Esophagus squamous epithelium (tissue), 5 donors: ENCODE measurements at regions of chr9 and their contacts with region 1.

Region 1: DNA sequence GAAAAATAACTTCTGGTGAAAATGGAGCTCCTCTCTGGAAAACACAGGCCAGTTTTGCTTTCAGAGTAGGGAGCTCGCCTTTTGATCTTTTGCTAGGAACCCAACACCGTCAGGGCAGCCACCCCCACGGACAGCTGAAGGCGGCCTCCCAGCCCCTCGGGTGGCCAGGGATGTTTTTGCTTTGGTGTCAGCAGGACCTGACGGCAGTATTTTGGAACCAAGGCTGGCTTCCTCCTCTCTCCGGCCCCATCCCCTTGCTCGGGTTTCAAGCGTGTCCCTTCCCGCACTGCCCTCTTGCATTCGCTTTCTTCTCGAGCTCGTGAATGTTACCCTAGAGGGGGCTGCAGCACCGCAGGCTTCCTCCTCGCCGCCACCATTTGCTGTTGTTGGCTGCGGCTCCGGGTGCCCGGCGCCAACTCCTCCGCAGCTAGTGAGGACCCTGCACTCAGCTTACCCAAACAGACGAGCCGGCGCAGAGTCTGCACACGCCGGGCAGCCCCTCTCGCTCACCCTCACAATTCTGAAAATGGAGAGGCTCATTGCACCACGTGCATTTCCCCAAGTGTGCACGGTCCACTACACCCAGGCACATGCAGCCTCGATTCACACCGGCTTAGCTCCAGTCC is 35.5 kb upstream of the ADAMTSL1 start:
- DNase-seq: no peak
- H3K4me3 ChIP-seq: peak overlapping the region; percentile 18 to 63 (median 43)
- H3K27ac ChIP-seq: peak overlapping the region; percentile 11 to 81 (median 68)
- H3K4me1 ChIP-seq: peaks cover 0 to 44% (median 8%) of the 10 kb centered on the region in 3 donors
- H3K27me3 ChIP-seq: no peaks in the 10 kb centered on the region
- CTCF ChIP-seq: peak in 3 of 6 experiments; percentile 9 to 24 (median 13)
- POLR2A ChIP-seq: no peak

Region 2: GRCh38 chr9:18268381-18268780 is 170.0 kb before region 1 on chr9:
- intact Hi-C with region 1: loop called (anchors 10 kb)
- DNase-seq: no peak
- H3K4me3 ChIP-seq: no peak overlapping the region
- H3K27ac ChIP-seq: no peak overlapping the region
- H3K4me1 ChIP-seq: no peaks in the 10 kb centered on the region
- H3K27me3 ChIP-seq: no peaks in the 10 kb centered on the region
- CTCF ChIP-seq: no peak
- POLR2A ChIP-seq: no peak